Activated CD8-positive, alpha-beta T cell treated with anti-CD3 and anti-CD28 coated beads for 36 hours (primary cell): ENCODE measurements at regions of chr1 and their contacts with region 1.

Region 1: DNA sequence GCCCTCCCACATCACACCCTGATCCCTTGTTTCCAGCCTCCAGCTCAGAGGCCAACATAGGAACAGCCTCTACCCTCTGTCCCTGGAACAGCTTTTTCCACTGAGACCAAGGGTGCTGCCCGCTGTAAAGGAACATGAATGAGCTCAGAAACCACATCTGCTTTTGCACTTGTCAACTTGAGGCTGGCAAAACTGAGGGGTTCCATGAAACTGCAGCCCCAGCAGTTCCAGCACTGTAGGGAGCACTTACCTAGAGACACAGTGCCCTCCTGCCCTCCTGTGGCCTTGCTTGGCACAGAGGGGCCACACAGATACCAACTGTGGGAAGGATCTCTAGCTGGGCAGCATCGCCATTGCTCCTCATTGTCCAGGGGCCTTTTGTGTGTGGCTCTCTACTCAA is 51.7 kb downstream of the ITPKB start:
- DNase-seq: peak; percentile 79
- ATAC-seq: peak; percentile 31
- H3K4me3 Mint-ChIP-seq: peak overlapping the region; percentile 15
- H3K27ac Mint-ChIP-seq: peak overlapping the region; percentile 99
- H3K4me1 Mint-ChIP-seq: peaks cover 100% of the 10 kb centered on the region
- H3K27me3 Mint-ChIP-seq: no peaks in the 10 kb centered on the region
- CTCF ChIP-seq: peak; percentile 61

Region 2: DNA sequence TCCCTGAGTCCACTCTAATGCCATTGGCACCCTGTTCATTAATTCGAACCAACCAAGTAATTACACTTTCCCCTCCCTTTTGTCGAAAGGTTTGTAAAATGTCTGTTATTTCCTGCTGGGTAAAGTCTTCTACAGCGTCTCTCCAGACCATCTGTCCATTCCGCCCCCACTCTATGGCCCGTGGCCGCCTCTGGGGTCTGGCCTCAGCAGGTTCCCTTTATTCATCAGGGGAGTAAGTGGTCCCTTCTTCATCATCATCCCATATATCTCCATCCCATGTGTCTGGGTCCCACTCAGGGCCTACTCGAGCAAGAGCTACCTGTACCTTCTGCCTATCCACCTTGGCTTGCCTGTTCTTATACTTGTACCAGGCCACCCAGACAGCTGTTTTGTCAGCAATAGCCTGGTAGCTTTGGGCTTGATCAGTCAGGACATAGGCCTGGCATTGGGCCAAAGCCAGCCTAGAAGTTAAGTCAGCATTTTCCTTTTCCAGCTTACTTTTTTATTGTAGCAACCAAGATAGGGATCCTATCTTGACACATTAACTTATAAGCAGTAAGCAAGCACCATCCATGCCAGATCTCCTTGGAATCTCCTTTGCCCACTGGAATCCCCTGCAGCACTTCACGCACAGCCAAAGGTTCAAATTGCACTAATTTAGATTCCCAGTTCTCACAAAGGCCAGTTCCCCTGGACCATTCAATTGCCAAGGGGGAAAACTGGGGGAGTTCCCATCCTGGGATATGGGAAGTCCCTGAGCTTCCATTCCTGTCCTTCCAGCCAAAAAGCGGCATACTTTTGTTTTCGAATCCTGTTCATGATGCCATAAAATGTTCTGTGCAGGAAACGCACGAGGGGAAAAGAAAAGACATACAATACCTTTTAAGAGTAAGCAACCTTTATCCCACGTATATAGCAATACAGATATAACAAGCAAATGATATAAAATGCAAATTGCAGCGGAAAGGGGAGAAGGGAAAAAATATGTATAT is 145.5 kb before region 1 on chr1:
- CTCF ChIA-PET with region 1: no interaction called
- POLR2A ChIA-PET with region 1: no interaction called
- intact Hi-C with region 1: no loop called
- DNase-seq: no peak
- ATAC-seq: no peak
- H3K4me3 Mint-ChIP-seq: no peak overlapping the region
- H3K27ac Mint-ChIP-seq: no peak overlapping the region
- H3K4me1 Mint-ChIP-seq: no peaks in the 10 kb centered on the region
- H3K27me3 Mint-ChIP-seq: peaks cover 15% of the 10 kb centered on the region
- CTCF ChIP-seq: no peak

Region 3: GRCh38 chr1:226558036-226558650 is 129.3 kb before region 1 on chr1:
- CTCF ChIA-PET with region 1: no interaction called
- POLR2A ChIA-PET with region 1: no interaction called
- intact Hi-C with region 1: no loop called
- DNase-seq: no peak
- ATAC-seq: no peak
- H3K4me3 Mint-ChIP-seq: no peak overlapping the region
- H3K27ac Mint-ChIP-seq: no peak overlapping the region
- H3K4me1 Mint-ChIP-seq: no peaks in the 10 kb centered on the region
- H3K27me3 Mint-ChIP-seq: peaks cover 15% of the 10 kb centered on the region
- CTCF ChIP-seq: no peak

Region 4: GRCh38 chr1:226575739-226576378 is 111.6 kb before region 1 on chr1:
- CTCF ChIA-PET with region 1: no interaction called
- POLR2A ChIA-PET with region 1: no interaction called
- intact Hi-C with region 1: no loop called
- DNase-seq: no peak
- ATAC-seq: no peak
- H3K4me3 Mint-ChIP-seq: no peak overlapping the region
- H3K27ac Mint-ChIP-seq: no peak overlapping the region
- H3K4me1 Mint-ChIP-seq: no peaks in the 10 kb centered on the region
- H3K27me3 Mint-ChIP-seq: no peaks in the 10 kb centered on the region
- CTCF ChIP-seq: no peak

Region 5: DNA sequence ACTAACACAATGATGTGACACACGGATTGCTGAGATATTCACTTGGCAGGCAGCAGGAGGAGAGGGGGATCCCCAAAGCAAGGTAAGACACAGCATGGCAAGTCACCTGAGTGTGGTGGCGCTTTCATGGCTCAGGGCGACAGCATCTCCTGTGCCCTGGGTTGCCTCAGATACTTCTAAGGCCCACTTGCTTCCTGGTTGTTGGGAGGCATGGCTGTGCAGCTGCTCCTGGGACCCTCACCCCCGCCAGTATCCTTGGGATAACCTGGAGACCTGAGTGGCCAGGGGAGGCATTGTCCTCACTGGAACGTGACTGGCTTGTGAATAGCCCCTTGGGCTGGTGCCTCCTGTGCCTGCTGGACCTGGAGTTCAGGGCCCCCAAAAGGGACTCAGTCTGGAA is 69.0 kb before region 1 on chr1:
- CTCF ChIA-PET with region 1: no interaction called
- POLR2A ChIA-PET with region 1: no interaction called
- intact Hi-C with region 1: no loop called
- DNase-seq: no peak
- ATAC-seq: no peak
- H3K4me3 Mint-ChIP-seq: no peak overlapping the region
- H3K27ac Mint-ChIP-seq: no peak overlapping the region
- H3K4me1 Mint-ChIP-seq: no peaks in the 10 kb centered on the region
- H3K27me3 Mint-ChIP-seq: no peaks in the 10 kb centered on the region
- CTCF ChIP-seq: no peak

Region 6: DNA sequence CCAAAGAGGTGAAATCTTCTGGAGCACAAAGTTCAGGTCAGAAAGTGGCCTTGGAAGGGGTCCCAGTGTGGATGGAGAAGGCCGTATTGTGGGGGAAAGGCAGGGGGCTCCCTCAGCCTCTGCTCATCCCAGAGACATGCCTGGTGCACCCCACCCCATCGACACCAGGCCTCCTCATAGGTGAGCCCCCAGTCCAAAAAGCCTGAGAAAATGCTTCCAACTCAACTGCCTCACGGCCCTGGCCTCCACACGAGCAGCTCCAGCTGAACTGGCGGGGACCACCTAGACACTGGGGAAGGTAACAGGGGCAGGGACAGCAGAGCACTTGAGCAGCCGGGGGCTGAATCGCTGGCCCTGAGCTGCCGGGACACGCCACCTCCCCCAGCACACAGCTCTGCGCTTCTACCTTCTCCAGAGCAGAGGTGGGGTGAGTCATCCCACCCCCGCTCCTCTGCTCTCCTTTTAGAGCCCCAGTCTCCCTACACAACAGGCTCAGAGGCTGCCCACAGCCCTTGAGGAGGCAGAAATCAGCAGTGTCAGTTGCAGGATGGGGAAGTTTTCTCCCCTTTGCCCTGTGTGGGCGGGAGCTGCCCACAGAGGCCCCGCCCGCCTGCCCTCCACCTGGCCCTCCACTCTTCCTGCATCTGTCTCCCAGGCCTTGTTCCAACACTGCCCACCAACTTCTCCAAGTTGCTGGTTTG is 44.4 kb before region 1 on chr1:
- CTCF ChIA-PET with region 1: interaction called, 17 read pairs
- POLR2A ChIA-PET with region 1: interaction called, 3 read pairs
- intact Hi-C with region 1: no loop called
- DNase-seq: peak; percentile 91
- ATAC-seq: peak; percentile 88
- H3K4me3 Mint-ChIP-seq: peak overlapping the region; percentile 55
- H3K27ac Mint-ChIP-seq: peak overlapping the region; percentile 95
- H3K4me1 Mint-ChIP-seq: peaks cover 62% of the 10 kb centered on the region
- H3K27me3 Mint-ChIP-seq: no peaks in the 10 kb centered on the region
- CTCF ChIP-seq: no peak

Region 7: GRCh38 chr1:226649780-226650179 is 37.6 kb before region 1 on chr1:
- CTCF ChIA-PET with region 1: interaction called, 50 read pairs
- POLR2A ChIA-PET with region 1: interaction called, 13 read pairs
- intact Hi-C with region 1: loop called (anchors 5 kb)
- DNase-seq: peak; percentile 68
- ATAC-seq: no peak
- H3K4me3 Mint-ChIP-seq: no peak overlapping the region
- H3K27ac Mint-ChIP-seq: peak overlapping the region; percentile 56
- H3K4me1 Mint-ChIP-seq: peaks cover 45% of the 10 kb centered on the region
- H3K27me3 Mint-ChIP-seq: no peaks in the 10 kb centered on the region
- CTCF ChIP-seq: peak; percentile 24

Region 8: GRCh38 chr1:226662642-226663326 is 24.6 kb before region 1 on chr1:
- CTCF ChIA-PET with region 1: interaction called, 16 read pairs
- POLR2A ChIA-PET with region 1: interaction called, 6 read pairs
- intact Hi-C with region 1: no loop called
- DNase-seq: peak; percentile 96
- ATAC-seq: peak; percentile 91
- H3K4me3 Mint-ChIP-seq: peak overlapping the region; percentile 49
- H3K27ac Mint-ChIP-seq: peak overlapping the region; percentile 96
- H3K4me1 Mint-ChIP-seq: peaks cover 98% of the 10 kb centered on the region
- H3K27me3 Mint-ChIP-seq: no peaks in the 10 kb centered on the region
- CTCF ChIP-seq: no peak

Region 9: DNA sequence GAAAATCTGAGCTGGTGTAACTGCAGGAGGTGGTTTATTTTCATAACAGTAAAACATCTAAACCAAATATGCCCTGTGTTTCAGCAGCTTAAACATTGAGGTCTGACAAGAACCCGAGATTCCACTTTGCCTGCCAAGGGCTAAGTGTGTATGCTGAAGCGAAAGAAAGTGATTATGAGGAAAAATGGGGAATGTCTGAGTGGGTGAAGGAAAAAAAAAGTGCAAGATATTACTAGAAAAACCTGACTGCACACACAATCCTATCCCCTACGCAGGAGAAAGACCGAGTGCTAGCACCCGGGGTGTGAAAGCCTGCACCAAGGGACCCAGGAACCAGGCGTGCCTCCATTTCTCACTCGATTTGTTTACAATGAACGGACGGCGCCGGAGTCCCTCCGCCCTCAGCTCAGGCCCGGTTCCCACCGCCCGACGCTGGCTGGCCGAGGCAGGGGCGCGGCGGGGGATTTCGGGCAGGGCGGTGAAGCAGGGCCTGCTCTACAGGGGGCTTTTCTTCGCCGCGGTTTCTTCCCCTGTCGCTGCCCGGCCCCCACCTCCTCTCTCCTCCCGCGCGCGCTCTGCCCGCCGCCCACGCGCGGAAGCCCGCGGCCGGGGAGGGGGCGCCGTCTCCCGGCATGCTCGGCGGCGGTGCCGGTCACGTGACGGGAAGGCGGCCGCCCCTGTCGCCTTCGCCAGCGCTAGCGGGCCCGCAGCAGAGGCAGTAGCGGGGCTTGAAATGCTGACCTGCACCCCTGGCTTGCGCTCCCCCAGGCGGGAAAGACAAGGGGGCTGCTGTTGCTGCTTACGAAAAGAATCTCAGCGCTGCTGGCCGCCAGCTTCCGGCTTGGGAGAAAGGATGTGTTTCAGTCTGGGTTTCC is 15.8 kb after region 1 on chr1:
- CTCF ChIA-PET with region 1: interaction called, 42 read pairs
- POLR2A ChIA-PET with region 1: interaction called, 27 read pairs
- intact Hi-C with region 1: no loop called
- DNase-seq: peak; percentile 84
- ATAC-seq: peak; percentile 76
- H3K4me3 Mint-ChIP-seq: peak overlapping the region; percentile 83
- H3K27ac Mint-ChIP-seq: peak overlapping the region; percentile 97
- H3K4me1 Mint-ChIP-seq: peaks cover 79% of the 10 kb centered on the region
- H3K27me3 Mint-ChIP-seq: no peaks in the 10 kb centered on the region
- CTCF ChIP-seq: no peak

Region 10: DNA sequence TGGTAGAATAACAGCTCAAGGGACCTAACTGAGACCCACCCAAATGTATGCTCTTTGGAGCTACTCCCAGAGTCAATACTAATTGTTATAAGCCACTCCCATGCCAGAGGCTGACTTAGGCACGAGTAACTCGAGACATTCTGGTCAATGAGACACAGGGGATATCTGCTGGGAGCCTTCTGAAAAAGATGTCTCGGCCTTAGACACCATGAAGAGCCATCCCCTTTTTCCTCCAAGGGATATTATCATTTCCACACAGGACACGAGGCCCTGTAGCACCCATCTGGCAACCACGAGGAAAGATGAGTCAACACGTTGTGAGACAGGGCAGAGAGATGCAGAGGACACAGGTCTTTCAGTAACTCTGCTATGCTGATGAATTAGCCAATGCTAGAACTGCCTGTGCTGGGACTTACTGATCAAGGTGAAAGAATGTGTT is 20.9 kb after region 1 on chr1:
- CTCF ChIA-PET with region 1: interaction called, 34 read pairs
- POLR2A ChIA-PET with region 1: interaction called, 27 read pairs
- intact Hi-C with region 1: no loop called
- DNase-seq: peak; percentile 63
- ATAC-seq: peak; percentile 69
- H3K4me3 Mint-ChIP-seq: peak overlapping the region; percentile 61
- H3K27ac Mint-ChIP-seq: peak overlapping the region; percentile 99
- H3K4me1 Mint-ChIP-seq: peaks cover 88% of the 10 kb centered on the region
- H3K27me3 Mint-ChIP-seq: no peaks in the 10 kb centered on the region
- CTCF ChIP-seq: no peak

Region 11: DNA sequence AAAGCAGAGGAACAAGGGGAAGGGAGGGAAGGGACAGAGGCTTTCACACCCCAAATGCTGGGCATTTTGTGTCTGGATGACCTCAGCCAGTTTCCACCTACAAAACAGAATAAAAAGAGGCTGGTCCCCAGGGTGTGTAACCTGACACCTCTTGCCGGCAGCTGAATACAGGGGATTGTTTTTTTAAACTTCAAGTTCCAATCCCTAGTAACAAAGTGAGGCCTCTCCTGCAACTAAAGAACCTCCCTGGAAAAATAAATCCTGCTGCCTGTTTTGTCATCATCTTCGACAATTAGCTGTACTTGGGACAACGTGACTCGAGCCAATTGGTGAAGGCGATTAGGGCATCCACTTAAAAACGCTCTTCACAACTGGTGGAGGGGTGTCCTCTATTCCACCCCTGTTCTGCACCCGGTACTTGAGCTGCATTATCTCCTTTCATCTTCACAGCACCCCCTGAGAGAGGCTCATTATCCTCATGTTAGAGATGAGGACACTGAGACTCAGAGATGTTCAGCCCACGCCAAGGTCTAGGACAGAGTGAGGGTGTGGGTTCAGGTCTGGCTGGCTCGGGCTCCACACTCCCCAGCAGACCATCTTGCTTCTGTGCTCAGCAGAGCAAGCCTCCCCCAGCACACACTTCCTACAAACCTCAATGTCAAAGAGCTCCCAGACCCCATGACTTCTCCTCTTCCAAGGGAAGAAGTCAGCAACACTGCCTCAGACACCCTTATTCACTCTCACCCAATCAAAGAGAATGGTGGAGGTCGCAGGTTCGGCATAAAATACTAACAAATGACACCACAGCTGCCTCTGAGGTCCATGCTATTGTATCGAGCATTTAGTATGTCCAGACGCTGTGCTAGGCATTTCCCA is 36.5 kb after region 1 on chr1:
- CTCF ChIA-PET with region 1: interaction called, 11 read pairs
- POLR2A ChIA-PET with region 1: interaction called, 10 read pairs
- intact Hi-C with region 1: no loop called
- DNase-seq: peak; percentile 59
- ATAC-seq: peak; percentile 31
- H3K4me3 Mint-ChIP-seq: peak overlapping the region; percentile 92
- H3K27ac Mint-ChIP-seq: peak overlapping the region; percentile 95
- H3K4me1 Mint-ChIP-seq: peaks cover 91% of the 10 kb centered on the region
- H3K27me3 Mint-ChIP-seq: no peaks in the 10 kb centered on the region
- CTCF ChIP-seq: no peak